Activated naive CD4-positive, alpha-beta T cell treated with anti-CD3 and anti-CD28 coated beads for 36 hours (primary cell): ENCODE measurements at regions of chr2 and their contacts with region 1.

Region 1: GRCh38 chr2:11829947-11830707 is 83.7 kb downstream of the LPIN1 start:
- DNase-seq: peak; percentile 80
- H3K4me3 Mint-ChIP-seq: peak overlapping the region; percentile 1
- H3K27ac Mint-ChIP-seq: peak overlapping the region; percentile 10
- H3K4me1 Mint-ChIP-seq: peaks cover 42% of the 10 kb centered on the region
- H3K27me3 Mint-ChIP-seq: no peaks in the 10 kb centered on the region

Region 2: GRCh38 chr2:11753886-11754699 is 76.0 kb before region 1 on chr2:
- CTCF ChIA-PET with region 1: no interaction called
- intact Hi-C with region 1: loop called (anchors 1 kb)
- DNase-seq: peak; percentile 88
- H3K4me3 Mint-ChIP-seq: peak overlapping the region; percentile 70
- H3K27ac Mint-ChIP-seq: peak overlapping the region; percentile 97
- H3K4me1 Mint-ChIP-seq: peaks cover 94% of the 10 kb centered on the region
- H3K27me3 Mint-ChIP-seq: no peaks in the 10 kb centered on the region

Region 3: GRCh38 chr2:12106440-12107080 is 276.4 kb after region 1 on chr2:
- CTCF ChIA-PET with region 1: no interaction called
- intact Hi-C with region 1: loop called (anchors 5 kb)
- DNase-seq: peak; percentile 82
- H3K4me3 Mint-ChIP-seq: no peak overlapping the region
- H3K27ac Mint-ChIP-seq: no peak overlapping the region
- H3K4me1 Mint-ChIP-seq: peaks cover 37% of the 10 kb centered on the region
- H3K27me3 Mint-ChIP-seq: no peaks in the 10 kb centered on the region

Region 4: GRCh38 chr2:12293874-12294273 is 463.7 kb after region 1 on chr2:
- CTCF ChIA-PET with region 1: no interaction called
- intact Hi-C with region 1: loop called (anchors 1 kb)
- DNase-seq: peak; percentile 18
- H3K4me3 Mint-ChIP-seq: no peak overlapping the region
- H3K27ac Mint-ChIP-seq: peak overlapping the region; percentile 75
- H3K4me1 Mint-ChIP-seq: peaks cover 55% of the 10 kb centered on the region
- H3K27me3 Mint-ChIP-seq: peaks cover 6% of the 10 kb centered on the region

Region 5: DNA sequence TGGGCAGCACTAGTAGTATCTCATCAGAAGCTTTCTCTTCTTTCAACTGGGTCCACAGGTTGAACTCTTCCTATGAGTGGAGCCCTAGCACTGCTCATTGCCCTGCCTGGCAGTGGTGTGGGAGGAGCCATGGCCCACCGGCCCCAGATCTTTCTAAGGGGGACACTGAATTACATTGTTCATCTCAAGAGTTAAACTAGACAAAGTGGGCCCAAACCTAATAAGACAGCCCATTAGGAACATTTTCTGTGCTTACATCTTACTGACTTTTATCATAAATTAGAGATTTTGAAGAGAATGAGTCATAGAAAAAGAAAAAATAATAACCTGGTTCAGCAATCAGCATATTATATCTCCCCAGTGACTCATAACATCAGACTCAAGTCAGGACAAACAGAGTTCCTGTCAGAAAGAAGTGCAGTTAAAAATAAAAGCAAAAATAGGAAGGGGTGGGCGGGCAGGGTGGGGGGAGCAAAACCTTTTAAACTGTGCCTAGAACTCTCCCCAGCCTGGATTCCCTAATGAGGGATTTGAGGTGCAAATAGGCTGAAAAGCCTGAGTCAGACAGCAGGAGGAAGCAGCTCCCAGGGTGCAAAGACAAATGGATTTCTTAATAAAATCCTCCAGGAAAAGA is 725.0 kb after region 1 on chr2:
- CTCF ChIA-PET with region 1: no interaction called
- intact Hi-C with region 1: loop called (anchors 1 kb)
- DNase-seq: peak; percentile 52
- H3K4me3 Mint-ChIP-seq: peak overlapping the region; percentile 5
- H3K27ac Mint-ChIP-seq: peak overlapping the region; percentile 86
- H3K4me1 Mint-ChIP-seq: peaks cover 35% of the 10 kb centered on the region
- H3K27me3 Mint-ChIP-seq: no peaks in the 10 kb centered on the region

Region 6: DNA sequence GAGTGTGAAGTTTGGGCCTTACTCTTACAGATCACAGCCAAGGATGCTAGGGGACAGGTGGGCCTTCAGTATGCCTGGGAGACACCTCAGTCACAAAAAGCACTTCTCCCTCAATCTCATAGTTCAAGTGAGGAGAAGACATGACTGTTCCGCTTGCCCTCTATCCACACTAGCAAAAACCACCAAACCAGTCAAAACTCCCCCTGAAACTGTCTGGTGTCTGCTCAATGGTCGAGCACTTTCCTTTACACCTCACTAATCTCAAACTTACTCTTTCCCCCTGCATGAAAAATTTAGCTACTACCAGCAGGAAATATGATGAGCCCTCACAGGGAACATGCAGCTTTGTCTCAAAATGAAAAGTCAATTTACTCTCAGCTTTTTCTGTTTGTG is 1118.8 kb after region 1 on chr2:
- CTCF ChIA-PET with region 1: no interaction called
- intact Hi-C with region 1: loop called (anchors 1 kb)
- DNase-seq: peak; percentile 29
- H3K4me3 Mint-ChIP-seq: no peak overlapping the region
- H3K27ac Mint-ChIP-seq: no peak overlapping the region
- H3K4me1 Mint-ChIP-seq: peaks cover 13% of the 10 kb centered on the region
- H3K27me3 Mint-ChIP-seq: peaks cover 18% of the 10 kb centered on the region